Activated CD4-positive, alpha-beta T cell treated with anti-CD3 and anti-CD28 coated beads, Interleukin-2, amount 10 ng/mL, durations not matched to agents 24 days and 14 days (primary cell): ENCODE measurements at regions of chr1 and their contacts with region 1.

Region 1: DNA sequence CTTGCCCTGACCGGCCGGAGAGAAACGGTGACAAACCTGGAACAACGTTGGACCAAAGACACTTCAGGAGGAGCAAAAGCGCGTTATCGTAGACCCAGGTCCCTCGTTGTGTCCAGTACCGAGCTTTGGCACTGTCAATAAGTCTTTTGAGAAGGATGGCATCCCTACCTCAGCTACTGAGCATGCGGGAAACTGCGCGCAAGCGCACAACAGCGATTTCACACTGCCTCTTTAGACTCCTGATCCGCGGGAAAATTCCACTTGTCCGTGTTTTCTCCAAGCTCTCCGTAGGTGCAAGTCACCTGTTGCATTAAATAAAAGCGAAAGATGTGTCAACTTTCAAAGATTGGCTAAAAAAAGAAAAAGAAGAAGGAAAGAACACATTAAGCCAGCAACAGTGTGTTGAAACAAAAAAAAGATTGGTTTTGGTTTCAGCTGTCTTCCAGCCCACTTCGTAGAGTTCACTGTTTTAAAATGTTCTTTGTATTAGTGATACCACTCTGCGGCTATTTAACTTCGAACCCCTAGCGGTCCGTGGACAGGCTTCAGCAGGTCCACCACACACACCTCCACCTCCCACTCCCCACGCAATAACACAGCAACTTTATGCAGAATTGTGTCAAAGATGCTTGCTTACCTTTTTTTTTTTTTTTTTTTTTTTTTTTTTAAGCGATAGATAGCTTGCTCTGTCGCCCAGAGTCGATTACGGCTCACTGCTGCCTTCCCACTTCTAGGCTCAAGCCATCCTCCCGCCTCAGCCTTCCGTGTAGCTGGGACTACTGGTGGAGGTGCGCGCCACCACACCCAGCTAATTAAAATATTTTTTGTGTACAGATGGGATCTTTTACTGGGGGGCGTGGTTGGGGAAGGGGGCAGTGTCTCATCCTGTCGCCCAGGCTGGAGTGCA is at the start of gene BPNT1:
- DNase-seq: peak; percentile 99
- H3K4me3 Mint-ChIP-seq: peak within 1 kb of the TSS; percentile 92
- H3K27ac Mint-ChIP-seq: peak within 1 kb of the TSS; percentile 87
- H3K4me1 Mint-ChIP-seq: peaks cover 16% of the 10 kb centered on the region
- H3K27me3 Mint-ChIP-seq: no peaks in the 10 kb centered on the region
- total RNA-seq, gene BPNT1: 24.9 and 27.2 TPM in 2 replicates

Region 2: DNA sequence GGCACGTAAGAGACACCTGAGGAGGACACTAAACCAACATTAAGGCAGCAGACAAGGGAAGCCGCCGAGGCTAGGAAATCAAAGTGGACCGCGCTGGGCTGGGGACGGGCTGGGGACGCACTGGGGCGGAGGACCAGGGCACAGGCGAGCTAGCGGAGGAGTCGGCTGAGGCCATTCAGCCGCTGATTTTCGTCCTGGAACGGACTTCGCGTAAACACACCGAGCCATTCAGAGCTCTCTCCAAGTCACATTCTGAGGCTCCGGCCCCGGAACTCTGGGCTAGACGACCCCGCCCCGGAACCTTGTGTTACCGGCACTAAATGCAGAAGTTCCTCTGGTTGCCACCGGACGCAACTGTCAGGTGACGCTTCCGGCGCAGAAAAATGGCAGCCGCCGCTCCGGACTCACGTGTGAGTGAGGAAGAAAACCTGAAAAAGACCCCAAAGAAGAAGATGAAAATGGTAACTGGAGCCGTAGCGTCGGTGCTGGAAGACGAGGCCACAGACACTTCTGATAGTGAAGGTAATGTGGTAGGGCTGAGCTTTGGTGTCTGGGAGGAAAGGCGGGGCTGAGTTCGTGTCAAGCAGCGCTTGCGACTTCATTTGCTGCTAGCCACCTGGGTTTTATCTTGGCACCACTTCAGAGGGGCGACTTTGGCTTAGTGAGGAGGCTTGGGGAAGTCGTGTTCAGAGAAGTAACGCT is 1804.8 kb before region 1 on chr1 and contains the start of gene RRP15:
- intact Hi-C with region 1: loop called (anchors 10 kb)
- DNase-seq: peak; percentile 96
- H3K4me3 Mint-ChIP-seq: peak within 1 kb of the TSS; percentile 93
- H3K27ac Mint-ChIP-seq: peak within 1 kb of the TSS; percentile 89
- H3K4me1 Mint-ChIP-seq: peaks cover 19% of the 10 kb centered on the region
- H3K27me3 Mint-ChIP-seq: peaks cover 7% of the 10 kb centered on the region
- total RNA-seq, gene RRP15: 41.0 and 44.7 TPM in 2 replicates

Region 3: GRCh38 chr1:219812491-219813203 is 277.3 kb before region 1 on chr1:
- intact Hi-C with region 1: no loop called
- DNase-seq: peak; percentile 62
- H3K4me3 Mint-ChIP-seq: no peak overlapping the region
- H3K27ac Mint-ChIP-seq: no peak overlapping the region
- H3K4me1 Mint-ChIP-seq: no peaks in the 10 kb centered on the region
- H3K27me3 Mint-ChIP-seq: peaks cover 5% of the 10 kb centered on the region

Region 4: DNA sequence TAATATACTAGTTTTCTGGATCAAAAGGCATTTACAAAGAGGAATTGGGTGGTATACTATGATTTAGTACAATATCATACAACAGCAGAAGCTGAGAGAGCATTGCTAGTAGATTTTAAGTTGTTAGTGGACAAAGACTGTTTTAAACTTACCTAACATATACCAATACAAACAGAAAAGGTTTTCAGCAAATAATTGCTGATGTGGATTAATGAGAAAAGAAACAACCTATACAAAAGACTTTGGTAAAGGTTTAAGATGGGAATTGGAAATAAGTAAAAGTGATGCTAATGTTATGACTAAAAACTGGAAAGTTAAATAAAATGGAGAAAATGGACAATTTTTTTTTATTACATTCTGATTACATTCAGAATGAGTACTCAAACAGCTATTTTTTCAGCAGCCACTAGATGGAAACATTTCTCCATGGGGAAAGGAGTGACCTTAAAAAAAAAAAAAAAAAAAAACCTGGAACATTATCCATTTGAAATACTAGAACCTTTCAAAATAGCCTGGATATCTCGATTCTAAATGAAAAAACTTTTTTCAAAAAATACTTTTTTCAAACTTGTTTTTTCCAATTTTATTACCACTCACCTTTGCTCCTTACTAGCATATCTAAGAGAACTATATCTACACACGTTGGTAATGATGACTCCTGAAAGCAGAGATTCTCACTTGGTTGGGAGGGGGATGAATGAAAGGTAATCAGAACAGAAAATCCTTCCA is 99.0 kb before region 1 on chr1:
- intact Hi-C with region 1: loop called (anchors 5 kb)
- DNase-seq: no peak
- H3K4me3 Mint-ChIP-seq: no peak overlapping the region
- H3K27ac Mint-ChIP-seq: no peak overlapping the region
- H3K4me1 Mint-ChIP-seq: peaks cover 3% of the 10 kb centered on the region
- H3K27me3 Mint-ChIP-seq: no peaks in the 10 kb centered on the region

Region 5: GRCh38 chr1:220046052-220046930 is 43.6 kb before region 1 on chr1 and contains the start of gene EPRS1:
- intact Hi-C with region 1: loop called (anchors 1 kb)
- DNase-seq: peak; percentile 98
- H3K4me3 Mint-ChIP-seq: peak within 1 kb of the TSS; percentile 91
- H3K27ac Mint-ChIP-seq: peak within 1 kb of the TSS; percentile 92
- H3K4me1 Mint-ChIP-seq: peaks cover 37% of the 10 kb centered on the region
- H3K27me3 Mint-ChIP-seq: no peaks in the 10 kb centered on the region
- total RNA-seq, gene EPRS1: 182 and 200 TPM in 2 replicates

Region 6: DNA sequence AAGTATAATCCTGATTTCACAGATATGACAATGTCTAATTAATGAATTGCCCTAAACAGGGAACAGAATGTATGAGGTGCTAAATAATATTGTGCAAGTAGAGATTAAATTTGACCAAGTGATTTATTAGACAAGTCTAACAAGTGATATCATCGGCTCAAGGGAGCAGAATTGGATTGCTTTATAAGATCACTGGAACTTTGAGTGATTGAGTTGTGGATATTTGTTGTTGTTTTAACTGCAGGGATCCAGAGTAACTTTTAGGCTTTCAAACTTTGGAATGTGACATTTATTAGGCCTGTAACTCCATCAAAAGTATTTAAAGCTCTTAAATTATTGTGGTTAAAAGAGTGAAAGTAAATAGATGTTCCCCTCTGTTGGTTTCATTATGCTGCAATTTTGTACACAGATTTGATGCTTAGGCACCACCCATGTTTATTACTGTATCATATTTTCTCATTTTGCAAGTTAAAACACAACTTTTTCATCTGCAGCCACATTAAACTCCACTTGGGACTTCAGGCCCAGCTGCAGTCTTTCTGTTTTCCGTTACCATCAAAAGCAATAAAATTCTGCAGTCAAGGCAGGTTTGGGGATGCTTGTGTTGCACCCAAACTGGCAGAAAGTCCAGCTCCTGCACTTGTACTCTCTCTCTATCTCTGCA is 995.9 kb after region 1 on chr1:
- intact Hi-C with region 1: no loop called
- DNase-seq: no peak
- H3K4me3 Mint-ChIP-seq: no peak overlapping the region
- H3K27ac Mint-ChIP-seq: no peak overlapping the region
- H3K4me1 Mint-ChIP-seq: peaks cover 2% of the 10 kb centered on the region
- H3K27me3 Mint-ChIP-seq: no peaks in the 10 kb centered on the region